A549 (cell line): ENCODE measurements at regions of chr14 and their contacts with region 1.

Region 1: DNA sequence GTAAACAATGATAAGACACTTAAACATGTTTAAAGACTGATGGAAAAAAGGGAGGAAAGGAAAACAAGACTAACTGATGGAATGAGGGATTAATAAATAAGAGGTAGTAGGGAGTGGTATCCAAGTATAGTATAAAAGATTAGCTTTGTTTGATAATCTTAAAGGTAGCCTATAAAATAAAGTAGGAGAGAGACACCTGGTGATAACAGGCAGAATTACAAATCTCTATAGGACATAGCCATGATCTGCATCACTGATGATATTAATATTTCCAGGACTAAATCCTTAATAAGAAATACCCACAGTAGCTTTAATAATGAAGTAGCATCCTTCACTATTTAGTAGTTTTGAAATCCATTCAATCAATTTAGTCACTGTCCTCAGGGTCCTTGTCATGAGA is 30.4 kb downstream of the DLGAP5 start:
- DNase-seq: peak; percentile 33 to 38
- ATAC-seq: peak; percentile 77 to 82; a peak in 5 of 6 replicates
- H3K4me3 ChIP-seq: no peak overlapping the region
- H3K27ac ChIP-seq: no peak overlapping the region
- H3K4me1 ChIP-seq: no peaks in the 10 kb centered on the region
- CTCF ChIP-seq: peak; percentile 73
- EP300 ChIP-seq: no peak
- POLR2A ChIP-seq: no peak
- RAD21 ChIP-seq: peak; percentile 73 to 75

Region 2: DNA sequence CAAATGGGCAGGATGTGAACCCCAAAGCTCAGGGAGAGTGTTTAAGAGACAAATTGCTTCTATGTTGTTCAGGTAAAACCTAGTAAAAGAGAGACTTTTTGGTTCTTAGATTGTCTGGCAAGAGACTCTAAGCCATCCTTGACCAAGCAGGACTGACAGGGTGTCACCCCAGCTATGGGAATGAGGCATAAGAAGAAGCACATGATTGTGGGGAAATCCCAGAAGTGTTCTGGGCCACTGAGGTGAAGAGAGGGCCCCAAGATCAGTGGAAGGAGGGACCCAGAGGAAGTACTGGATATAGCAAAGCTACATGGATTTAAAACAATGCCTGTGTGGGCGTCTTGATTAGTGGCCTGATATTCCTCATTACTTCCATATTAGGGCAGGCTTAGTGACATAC is 495.0 kb before region 1 on chr14:
- CTCF ChIA-PET with region 1: no interaction called
- POLR2A ChIA-PET with region 1: no interaction called
- DNase-seq: no peak
- ATAC-seq: no peak
- H3K4me3 ChIP-seq: no peak overlapping the region
- H3K27ac ChIP-seq: no peak overlapping the region
- H3K4me1 ChIP-seq: peaks cover 21% of the 10 kb centered on the region
- CTCF ChIP-seq: no peak
- EP300 ChIP-seq: no peak
- POLR2A ChIP-seq: no peak
- RAD21 ChIP-seq: no peak

Region 3: GRCh38 chr14:55051426-55052268 is 109.3 kb before region 1 on chr14 and contains the start of gene MAPK1IP1L:
- CTCF ChIA-PET with region 1: interaction called, 28 read pairs
- POLR2A ChIA-PET with region 1: interaction called, 7 read pairs
- DNase-seq: peak; percentile 90 to 91
- ATAC-seq: peak; percentile 95 to 96
- H3K4me3 ChIP-seq: peak within 1 kb of the TSS; percentile 95
- H3K27ac ChIP-seq: peak within 1 kb of the TSS; percentile 98 to 100
- H3K4me1 ChIP-seq: peaks cover 29% of the 10 kb centered on the region
- CTCF ChIP-seq: peak; percentile 88
- EP300 ChIP-seq: 0 out of 5 replicates have a peak, but pooled peaks of 1 of the 2 experiments have one; percentile 10
- POLR2A ChIP-seq: peak; percentile 92
- RAD21 ChIP-seq: peak; percentile 31 to 61; a peak in 4 of 5 replicates
- polyA plus RNA-seq, gene MAPK1IP1L: 72.3 and 76.1 TPM in 2 replicates

Region 4: GRCh38 chr14:55071870-55072640 is 88.9 kb before region 1 on chr14:
- CTCF ChIA-PET with region 1: interaction called, 32 read pairs
- POLR2A ChIA-PET with region 1: no interaction called
- DNase-seq: peak in 1 of 2 experiments; percentile 32
- ATAC-seq: peak; percentile 51 to 58; a peak in 5 of 6 replicates
- H3K4me3 ChIP-seq: no peak overlapping the region
- H3K27ac ChIP-seq: no peak overlapping the region
- H3K4me1 ChIP-seq: peaks cover 3% of the 10 kb centered on the region; the same call in 1 of the 3 replicates
- CTCF ChIP-seq: no peak
- EP300 ChIP-seq: no peak
- POLR2A ChIP-seq: no peak
- RAD21 ChIP-seq: no peak

Region 5: GRCh38 chr14:55077155-55077554 is 83.8 kb before region 1 on chr14:
- CTCF ChIA-PET with region 1: interaction called, 32 read pairs
- POLR2A ChIA-PET with region 1: interaction called, 3 read pairs
- DNase-seq: peak in 1 of 2 experiments; percentile 32
- ATAC-seq: peak; percentile 42 to 61; a peak in 5 of 6 replicates
- H3K4me3 ChIP-seq: no peak overlapping the region
- H3K27ac ChIP-seq: no peak overlapping the region
- H3K4me1 ChIP-seq: no peaks in the 10 kb centered on the region
- CTCF ChIP-seq: no peak
- EP300 ChIP-seq: no peak
- POLR2A ChIP-seq: no peak
- RAD21 ChIP-seq: no peak

Region 6: DNA sequence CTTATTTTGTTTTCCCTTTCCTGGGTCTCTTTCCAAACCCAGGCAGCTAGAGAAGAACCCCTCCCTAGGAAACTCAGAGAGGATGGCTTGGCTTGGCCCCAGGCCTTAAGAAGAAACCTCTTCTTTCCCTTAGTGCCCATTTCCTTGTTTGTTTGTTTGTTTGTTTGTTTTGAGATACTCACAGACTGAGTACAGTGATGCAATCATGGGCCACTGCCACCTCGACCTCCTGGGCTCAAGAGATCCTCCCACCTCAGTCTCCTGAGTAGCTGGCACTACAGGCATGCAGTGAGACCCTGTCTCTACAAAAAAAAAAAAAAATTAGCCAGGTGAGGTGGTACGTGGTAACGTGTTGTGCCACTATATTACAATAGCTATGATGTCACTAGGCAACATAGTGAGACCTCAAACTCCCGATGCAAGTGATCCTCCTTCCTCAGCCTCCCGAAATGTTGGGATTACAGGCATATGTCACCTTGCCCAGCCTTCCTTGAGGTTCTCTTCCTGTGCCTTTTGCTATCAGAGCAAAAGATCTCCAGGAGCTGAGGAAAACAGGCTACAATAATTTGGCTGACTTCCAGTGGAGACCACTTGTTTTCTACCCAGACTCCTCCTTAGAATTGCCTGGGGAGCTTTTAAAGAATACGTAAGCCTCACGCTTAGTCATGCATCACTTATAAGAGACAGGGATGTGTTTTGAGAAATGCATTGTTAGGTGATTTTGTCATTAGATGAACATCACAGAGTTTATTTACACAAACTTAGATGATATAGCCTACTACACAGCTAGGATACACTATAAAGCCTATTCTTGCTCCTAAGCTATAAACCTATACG is 66.5 kb before region 1 on chr14:
- CTCF ChIA-PET with region 1: interaction called, 183 read pairs
- POLR2A ChIA-PET with region 1: interaction called, 3 read pairs
- DNase-seq: no peak
- ATAC-seq: peak in 1 of 2 experiments; percentile 19; a peak in 1 of 6 replicates
- H3K4me3 ChIP-seq: no peak overlapping the region
- H3K27ac ChIP-seq: peak overlapping the region in 1 of 2 experiments; percentile 43; a peak in 1 of 6 replicates
- H3K4me1 ChIP-seq: peaks cover 16% of the 10 kb centered on the region; the same call in 2 of the 3 replicates
- CTCF ChIP-seq: no peak
- EP300 ChIP-seq: no peak
- POLR2A ChIP-seq: no peak
- RAD21 ChIP-seq: no peak

Region 7: GRCh38 chr14:55102141-55102621 is 58.8 kb before region 1 on chr14:
- CTCF ChIA-PET with region 1: interaction called, 21 read pairs
- POLR2A ChIA-PET with region 1: interaction called, 3 read pairs
- DNase-seq: peak; percentile 62 to 84
- ATAC-seq: peak; percentile 69 to 76
- H3K4me3 ChIP-seq: peak overlapping the region; percentile 33; the same call in 2 of the 3 replicates
- H3K27ac ChIP-seq: peak overlapping the region; percentile 91 to 93
- H3K4me1 ChIP-seq: peaks cover 27% of the 10 kb centered on the region
- CTCF ChIP-seq: no peak
- EP300 ChIP-seq: no peak
- POLR2A ChIP-seq: no peak; the same call in 1 of the 2 replicates
- RAD21 ChIP-seq: no peak; a peak in 1 of 5 replicates

Region 8: GRCh38 chr14:55136885-55137786 is 23.9 kb before region 1 on chr14:
- CTCF ChIA-PET with region 1: interaction called, 18 read pairs
- POLR2A ChIA-PET with region 1: no interaction called
- DNase-seq: no peak
- ATAC-seq: no peak
- H3K4me3 ChIP-seq: no peak overlapping the region
- H3K27ac ChIP-seq: no peak overlapping the region
- H3K4me1 ChIP-seq: no peaks in the 10 kb centered on the region
- CTCF ChIP-seq: no peak
- EP300 ChIP-seq: no peak
- POLR2A ChIP-seq: no peak
- RAD21 ChIP-seq: no peak